Prostate gland (tissue), 2 donors: ENCODE measurements at regions of chr3 and their contacts with region 1.

Region 1: DNA sequence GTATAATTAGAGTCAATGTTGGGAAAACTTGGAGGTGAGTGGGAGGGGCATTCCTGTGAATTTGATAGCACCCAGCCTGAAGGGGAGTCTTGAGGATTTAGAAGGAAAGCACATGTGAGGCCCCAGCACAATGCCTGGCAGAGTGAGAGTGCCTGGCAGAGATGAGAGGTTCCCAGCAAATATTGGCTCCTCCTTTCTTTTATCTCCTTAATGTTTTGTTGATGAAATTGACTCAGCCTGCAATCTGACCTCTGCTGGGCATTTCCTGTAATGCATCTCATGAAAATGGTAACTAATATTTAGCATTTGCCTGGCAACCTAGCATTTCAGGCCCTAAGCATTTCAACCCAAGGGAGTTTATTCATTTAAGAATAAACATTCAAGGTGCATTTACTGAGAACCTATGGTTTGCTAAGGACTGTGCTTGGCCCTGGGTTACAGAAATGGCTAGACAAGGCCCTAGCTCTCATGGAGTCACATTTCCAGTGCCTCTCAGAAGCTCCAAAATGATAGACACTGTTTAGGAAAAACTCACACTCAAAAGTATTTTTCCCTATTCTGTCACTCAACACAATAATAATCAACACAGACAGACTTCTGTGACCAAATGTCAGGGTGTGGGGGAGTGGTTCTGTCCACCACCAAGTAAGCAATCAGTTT is 19.0 kb downstream of the PDHB start:
- DNase-seq: peak; percentile 49
- H3K4me3 ChIP-seq: no peak overlapping the region
- H3K27ac ChIP-seq: no peak overlapping the region
- H3K4me1 ChIP-seq: no peaks in the 10 kb centered on the region
- H3K27me3 ChIP-seq: no peaks in the 10 kb centered on the region
- CTCF ChIP-seq: peak; percentile 71 to 85 (median 84)
- POLR2A ChIP-seq: no peak

Region 2: DNA sequence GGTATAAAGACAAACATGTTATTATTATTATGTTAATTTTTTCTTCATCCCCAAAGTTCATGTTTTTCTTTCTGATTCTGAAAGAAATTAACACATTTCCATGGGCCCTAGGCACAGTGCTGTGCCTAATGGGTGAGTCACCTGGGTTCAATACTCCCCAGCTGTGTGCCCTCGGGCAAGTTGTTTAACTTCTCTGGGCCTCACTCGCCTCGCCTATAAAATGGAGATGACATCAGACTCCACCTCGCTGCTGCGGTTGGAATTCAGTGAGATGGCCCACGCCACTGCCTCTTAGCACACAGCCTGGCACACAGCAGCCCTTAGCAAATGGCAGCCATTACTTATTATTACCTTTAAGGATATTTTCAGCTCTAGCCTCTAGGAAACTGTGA is 226.5 kb before region 1 on chr3:
- intact Hi-C with region 1: loop called (anchors 10 kb)
- DNase-seq: no peak
- H3K4me3 ChIP-seq: no peak overlapping the region
- H3K27ac ChIP-seq: no peak overlapping the region
- H3K4me1 ChIP-seq: no peaks in the 10 kb centered on the region
- H3K27me3 ChIP-seq: no peaks in the 10 kb centered on the region
- CTCF ChIP-seq: no peak
- POLR2A ChIP-seq: no peak

Region 3: DNA sequence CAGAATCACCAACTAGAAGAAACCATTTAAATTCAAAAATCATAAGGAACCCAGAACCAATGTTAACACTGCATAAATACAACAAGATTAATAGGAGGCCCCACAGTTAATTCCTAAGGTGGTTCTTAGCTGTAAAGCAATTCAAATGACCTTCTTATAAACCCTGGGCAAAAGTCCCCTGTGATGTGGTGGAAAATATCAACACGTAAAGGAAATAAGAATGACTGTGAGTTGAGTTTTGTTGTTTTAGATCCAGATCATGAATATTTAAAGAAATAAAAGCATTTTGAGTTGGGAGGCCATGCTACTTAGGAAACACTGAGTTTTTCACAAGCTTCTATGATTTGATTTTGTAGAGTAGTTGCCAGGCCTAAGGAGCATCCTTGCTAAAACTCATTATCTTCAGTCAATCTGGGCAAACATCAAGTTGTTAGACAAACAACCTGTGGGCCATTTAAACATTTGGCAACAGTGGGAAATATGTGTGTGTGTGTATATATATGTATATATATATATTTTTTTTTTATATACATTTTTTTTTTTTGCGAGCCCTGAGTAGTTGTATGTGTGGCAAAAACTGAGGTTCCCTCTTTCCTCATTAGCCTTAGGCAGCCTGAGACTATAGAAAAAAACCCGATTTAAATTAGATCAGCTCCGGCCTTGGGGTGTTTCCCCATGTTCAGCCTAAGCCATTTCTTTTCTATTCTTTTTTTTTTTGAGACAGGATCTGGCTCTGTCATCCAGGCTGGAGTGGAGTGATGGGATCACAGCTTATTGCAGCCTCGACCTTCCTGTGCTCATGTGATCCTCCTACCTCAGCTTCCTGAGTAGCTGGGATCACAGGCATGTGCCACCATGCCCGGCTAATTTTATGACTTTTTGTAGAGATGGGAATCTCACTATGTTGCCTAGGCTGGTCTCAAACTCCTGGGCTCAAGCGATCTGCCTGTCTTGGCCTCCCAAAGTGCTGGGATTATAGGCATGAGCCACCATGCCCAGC is 90.0 kb before region 1 on chr3:
- intact Hi-C with region 1: loop called (anchors 5 kb)
- DNase-seq: no peak
- H3K4me3 ChIP-seq: no peak overlapping the region
- H3K27ac ChIP-seq: no peak overlapping the region
- H3K4me1 ChIP-seq: no peaks in the 10 kb centered on the region
- H3K27me3 ChIP-seq: no peaks in the 10 kb centered on the region
- CTCF ChIP-seq: no peak
- POLR2A ChIP-seq: no peak

Region 4: DNA sequence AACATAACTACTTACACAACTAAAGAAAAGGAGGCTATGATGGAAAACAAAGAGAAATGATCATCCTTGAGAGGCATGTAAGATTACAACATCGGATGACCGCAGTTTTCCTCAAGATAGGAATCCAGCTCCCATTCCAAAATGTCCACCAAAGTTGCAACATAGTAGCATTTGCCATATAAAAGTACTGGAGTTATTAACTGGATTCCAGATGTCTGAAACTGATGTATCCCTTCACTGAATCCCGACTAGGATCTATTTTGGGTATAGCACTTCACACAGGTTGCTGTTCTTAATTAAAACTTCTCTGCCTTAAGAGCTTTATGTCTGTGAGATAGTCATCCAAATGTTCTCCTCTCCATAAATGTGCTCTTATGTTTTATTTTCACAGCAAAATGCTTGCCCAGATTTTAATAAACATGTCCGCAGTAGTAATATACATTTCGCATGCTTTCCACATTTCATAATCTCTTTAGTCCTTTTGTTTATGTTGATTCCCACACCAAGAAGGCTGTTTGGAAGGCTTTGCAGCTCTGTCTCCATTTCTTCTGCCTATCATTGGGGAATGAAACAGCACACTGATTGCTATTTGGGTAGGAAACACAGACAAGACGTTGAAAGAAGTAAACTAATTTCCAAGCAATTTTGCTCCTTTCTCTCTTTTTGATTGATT is 1351.7 kb after region 1 on chr3:
- intact Hi-C with region 1: no loop called
- DNase-seq: no peak
- H3K4me3 ChIP-seq: no peak overlapping the region
- H3K27ac ChIP-seq: no peak overlapping the region
- H3K4me1 ChIP-seq: no peaks in the 10 kb centered on the region
- H3K27me3 ChIP-seq: no peaks in the 10 kb centered on the region
- CTCF ChIP-seq: no peak
- POLR2A ChIP-seq: no peak